ENCODE measurements at regions of chr21 and their contacts with region 1.

Region 1: GRCh38 chr21:39379986-39380891 is 31.4 kb upstream of the HMGN1 start:
- DNase-seq: peak; percentile 99
- ATAC-seq: peak; percentile 100

Region 2: DNA sequence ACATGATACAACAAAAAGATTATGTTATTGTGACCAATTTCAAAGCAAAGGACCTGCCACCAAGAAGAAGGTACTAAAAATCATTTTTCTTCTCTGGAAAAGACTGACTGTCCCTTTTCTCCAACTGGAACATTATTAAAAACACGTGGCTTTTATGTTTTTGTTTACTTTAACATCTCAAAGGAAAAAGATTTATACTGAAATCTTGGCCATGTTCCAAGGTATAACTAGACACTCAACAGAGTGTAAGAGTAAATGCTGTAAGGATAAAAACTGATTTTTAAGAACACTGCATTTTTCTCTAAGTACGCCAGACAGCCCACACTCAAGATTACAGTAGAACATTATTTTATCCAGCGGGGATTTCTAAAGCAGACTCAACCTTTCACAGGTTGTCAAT is 128.9 kb before region 1 on chr21:
- intact Hi-C with region 1: no loop called
- DNase-seq: no peak
- ATAC-seq: no peak

Region 3: DNA sequence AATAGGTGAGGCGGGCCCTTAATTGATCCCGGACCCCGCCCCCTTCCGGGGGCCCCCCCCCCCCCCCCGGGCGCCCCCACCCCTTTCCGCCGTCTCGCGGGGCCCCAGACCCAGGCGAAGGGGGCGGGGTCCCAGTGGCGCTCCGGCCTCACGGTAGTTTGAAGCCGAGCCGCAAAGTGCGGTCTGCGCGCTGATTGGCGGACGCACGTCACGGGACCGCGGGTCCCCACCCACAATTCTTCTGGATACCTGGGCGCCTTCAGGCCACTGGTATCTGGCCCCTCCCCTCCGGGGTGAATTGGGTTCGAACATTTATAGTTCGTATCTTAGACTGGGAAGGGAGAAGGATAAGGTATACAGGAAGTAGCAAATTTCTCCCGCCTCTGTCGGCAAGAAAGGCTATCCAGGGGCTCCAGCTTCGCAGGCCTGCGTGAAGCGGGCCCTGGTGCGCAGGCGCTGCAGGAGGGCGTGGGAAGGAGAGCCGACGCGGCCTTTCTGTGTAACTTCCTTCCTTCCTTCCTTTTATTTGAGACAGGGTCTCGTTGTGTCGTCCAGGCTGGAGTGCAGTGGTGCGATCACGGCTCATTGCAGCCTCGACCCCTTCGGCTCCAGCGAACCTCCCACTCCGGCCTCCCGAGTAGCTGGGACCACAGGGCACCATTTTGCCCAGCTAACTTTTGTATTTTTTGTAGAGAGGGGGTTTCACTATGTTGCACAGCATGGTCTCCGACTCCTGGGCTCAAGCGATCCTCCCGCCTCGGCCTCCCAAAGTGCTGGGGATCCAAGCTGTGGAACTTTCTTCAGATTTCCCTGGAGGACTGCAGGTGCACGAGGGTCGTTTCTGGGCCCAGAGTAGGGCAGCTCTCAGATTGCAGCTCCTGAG is 30.8 kb before region 1 on chr21:
- intact Hi-C with region 1: loop called (anchors 2 kb)
- DNase-seq: peak; percentile 98
- ATAC-seq: peak; percentile 97